Activated T-helper 1 cell treated with anti-CD3 and anti-CD28 coated beads, Interleukin-12 subunit alpha, Interleukin-12 subunit beta, Interleukin-2, Interleukin-4 antibody, amounts not matched to agents 30 ng/mL and 10 ng/mL and 1 ng/mL, durations not matched to agents 14 hours and 24 hours and 36 hours (primary cell): ENCODE measurements at regions of chr20 and their contacts with region 1.

Region 1: GRCh38 chr20:49812463-49813304 is at the start of gene SLC9A8:
- DNase-seq: peak; percentile 83
- H3K4me3 Mint-ChIP-seq: peak within 1 kb of the TSS; percentile 91
- H3K27ac Mint-ChIP-seq: peak within 1 kb of the TSS; percentile 97
- H3K4me1 Mint-ChIP-seq: peaks cover 50% of the 10 kb centered on the region
- H3K27me3 Mint-ChIP-seq: no peaks in the 10 kb centered on the region
- total RNA-seq, gene SLC9A8: 16.2 and 20.8 TPM in 2 replicates

Region 2: GRCh38 chr20:49594143-49594930 is 218.3 kb before region 1 on chr20:
- intact Hi-C with region 1: loop called (anchors 2 kb)
- DNase-seq: peak; percentile 76
- H3K4me3 Mint-ChIP-seq: peak overlapping the region; percentile 81
- H3K27ac Mint-ChIP-seq: peak overlapping the region; percentile 99
- H3K4me1 Mint-ChIP-seq: peaks cover 90% of the 10 kb centered on the region
- H3K27me3 Mint-ChIP-seq: no peaks in the 10 kb centered on the region

Region 3: DNA sequence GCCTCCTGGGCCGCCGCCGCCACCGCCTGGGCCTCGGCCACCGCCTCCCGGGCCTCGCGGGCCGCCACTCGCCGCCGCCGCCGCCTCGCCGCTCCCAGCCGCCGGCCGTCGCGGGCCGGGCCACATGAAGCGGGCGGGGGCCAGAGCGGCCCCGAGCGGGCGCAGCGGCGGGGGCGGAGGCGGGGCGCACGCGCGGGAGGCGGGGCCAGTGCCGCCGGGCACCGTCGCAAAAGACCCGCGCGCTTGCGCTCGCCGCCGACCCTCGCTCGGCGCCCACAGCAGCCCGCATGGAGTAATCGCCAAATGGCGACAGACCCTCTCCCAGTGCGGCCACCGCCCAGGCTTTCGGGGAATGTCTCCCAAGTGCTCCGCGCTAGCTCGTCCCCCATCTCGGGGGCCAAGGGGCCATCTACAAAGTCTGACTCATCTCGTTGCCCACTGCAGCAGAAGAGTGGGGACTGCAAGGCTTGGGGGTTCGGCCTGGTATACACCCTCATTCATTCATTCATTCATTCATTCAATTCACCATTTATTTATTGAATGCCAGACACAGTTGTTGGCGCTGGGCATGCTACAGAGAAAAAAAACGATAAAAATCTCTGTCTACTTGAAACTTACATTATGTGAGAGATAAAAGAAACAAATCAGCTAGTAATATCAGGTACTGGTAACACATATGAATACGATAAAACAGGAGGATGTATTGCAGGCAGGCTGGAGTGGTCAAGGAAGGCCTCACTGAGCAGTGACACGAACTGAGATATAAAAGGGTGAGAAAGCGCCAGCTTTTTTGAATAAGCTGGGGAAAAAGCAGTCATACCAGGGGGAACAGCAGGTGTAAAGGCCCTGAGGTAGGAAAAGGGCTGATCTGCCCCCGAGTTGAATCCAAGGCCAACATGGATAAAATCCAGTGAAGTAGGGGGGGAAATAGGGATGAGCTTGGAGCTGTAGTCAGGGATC is 98.7 kb before region 1 on chr20 and contains the start of gene B4GALT5:
- intact Hi-C with region 1: loop called (anchors 2 kb)
- DNase-seq: peak; percentile 60
- H3K4me3 Mint-ChIP-seq: peak within 1 kb of the TSS; percentile 92
- H3K27ac Mint-ChIP-seq: peak within 1 kb of the TSS; percentile 94
- H3K4me1 Mint-ChIP-seq: peaks cover 49% of the 10 kb centered on the region
- H3K27me3 Mint-ChIP-seq: peaks cover 5% of the 10 kb centered on the region
- total RNA-seq, gene B4GALT5: 38.9 and 39.3 TPM in 2 replicates

Region 4: GRCh38 chr20:49797344-49797615 is 15.4 kb before region 1 on chr20:
- intact Hi-C with region 1: loop called (anchors 1 kb)
- DNase-seq: no peak
- H3K4me3 Mint-ChIP-seq: no peak overlapping the region
- H3K27ac Mint-ChIP-seq: no peak overlapping the region
- H3K4me1 Mint-ChIP-seq: peaks cover 47% of the 10 kb centered on the region
- H3K27me3 Mint-ChIP-seq: peaks cover 17% of the 10 kb centered on the region

Region 5: GRCh38 chr20:49915378-49916145 is 102.9 kb after region 1 on chr20 and contains the start of gene SPATA2:
- intact Hi-C with region 1: loop called (anchors 2 kb)
- DNase-seq: peak; percentile 86
- H3K4me3 Mint-ChIP-seq: peak within 1 kb of the TSS; percentile 95
- H3K27ac Mint-ChIP-seq: peak within 1 kb of the TSS; percentile 99
- H3K4me1 Mint-ChIP-seq: peaks cover 27% of the 10 kb centered on the region
- H3K27me3 Mint-ChIP-seq: peaks cover 1% of the 10 kb centered on the region
- total RNA-seq, gene SPATA2: 9.7 and 10.4 TPM in 2 replicates

Region 6: DNA sequence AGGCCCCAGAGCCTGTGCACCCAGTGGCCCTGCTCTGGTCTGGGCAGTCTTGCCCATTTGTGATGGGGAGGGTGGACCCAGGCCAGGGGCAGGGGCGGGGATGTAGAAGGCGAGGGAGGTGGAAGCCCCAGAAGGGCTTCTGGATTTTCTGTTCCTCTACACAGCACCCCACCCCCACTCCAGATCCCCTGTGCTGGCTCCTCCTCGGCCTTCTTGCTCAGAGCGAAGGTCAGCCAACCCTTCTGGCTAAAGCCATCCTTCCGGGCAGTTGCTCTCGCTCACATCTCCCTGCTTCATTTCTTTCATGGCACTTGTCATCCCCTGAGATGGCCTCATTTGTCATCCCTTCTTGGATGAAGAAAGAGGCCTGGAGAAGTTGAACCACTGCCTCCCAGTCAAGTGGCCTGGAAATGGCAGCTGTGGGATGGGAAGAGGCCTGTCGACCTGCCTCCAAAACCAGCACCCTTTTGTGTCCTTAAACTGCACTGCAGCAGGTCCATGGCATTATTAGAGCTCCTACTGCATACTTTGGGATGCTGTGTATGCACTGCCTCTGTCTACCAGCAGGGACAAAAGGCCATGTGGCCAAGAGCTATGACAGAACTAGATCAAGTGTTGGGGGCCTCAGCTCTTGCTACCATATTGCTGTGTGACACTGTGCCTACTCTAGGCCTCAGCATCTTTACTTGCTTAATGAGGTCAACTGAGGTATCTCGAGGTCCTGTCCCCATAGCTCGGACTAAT is 321.0 kb after region 1 on chr20:
- intact Hi-C with region 1: no loop called
- DNase-seq: no peak
- H3K4me3 Mint-ChIP-seq: no peak overlapping the region
- H3K27ac Mint-ChIP-seq: no peak overlapping the region
- H3K4me1 Mint-ChIP-seq: peaks cover 22% of the 10 kb centered on the region
- H3K27me3 Mint-ChIP-seq: no peaks in the 10 kb centered on the region